PC-9 (cell line): ENCODE measurements at regions of chr1 and their contacts with region 1.

Region 1: GRCh38 chr1:27192039-27192529 is 37.2 kb upstream of the SLC9A1 start:
- DNase-seq: peak; percentile 44 to 78
- H3K4me3 ChIP-seq: no peak overlapping the region
- H3K27ac ChIP-seq: peak overlapping the region; percentile 94
- H3K4me1 ChIP-seq: peaks cover 21% of the 10 kb centered on the region
- H3K27me3 ChIP-seq: no peaks in the 10 kb centered on the region
- CTCF ChIP-seq: no peak

Region 2: DNA sequence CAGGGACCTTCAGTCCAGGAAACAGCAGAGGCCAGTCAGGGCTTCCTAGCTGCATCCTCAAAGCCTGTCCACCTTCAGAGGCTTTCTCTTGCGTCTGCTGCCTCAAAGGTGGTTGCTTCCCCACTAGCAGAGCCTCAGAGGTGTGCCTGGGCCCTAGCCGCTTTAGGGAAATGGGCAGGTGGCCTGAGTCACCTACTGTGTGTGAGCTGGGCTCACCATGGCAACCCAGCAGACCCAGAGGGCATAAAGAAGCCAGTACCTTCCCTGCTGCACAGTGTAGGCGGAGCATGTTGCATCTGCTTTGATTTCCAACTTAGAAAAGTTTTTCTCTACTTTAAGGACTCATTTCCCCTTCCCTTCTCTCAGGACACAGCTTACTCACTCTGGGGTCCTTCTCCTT is 49.6 kb before region 1 on chr1:
- CTCF ChIA-PET with region 1: interaction called, 10 read pairs
- POLR2A ChIA-PET with region 1: interaction called, 6 read pairs
- intact Hi-C with region 1: no loop called
- DNase-seq: peak; percentile 84 to 86
- H3K4me3 ChIP-seq: peak overlapping the region; percentile 16; the same call in 1 of the 2 replicates
- H3K27ac ChIP-seq: peak overlapping the region; percentile 65
- H3K4me1 ChIP-seq: peaks cover 70% of the 10 kb centered on the region
- H3K27me3 ChIP-seq: no peaks in the 10 kb centered on the region
- CTCF ChIP-seq: no peak

Region 3: DNA sequence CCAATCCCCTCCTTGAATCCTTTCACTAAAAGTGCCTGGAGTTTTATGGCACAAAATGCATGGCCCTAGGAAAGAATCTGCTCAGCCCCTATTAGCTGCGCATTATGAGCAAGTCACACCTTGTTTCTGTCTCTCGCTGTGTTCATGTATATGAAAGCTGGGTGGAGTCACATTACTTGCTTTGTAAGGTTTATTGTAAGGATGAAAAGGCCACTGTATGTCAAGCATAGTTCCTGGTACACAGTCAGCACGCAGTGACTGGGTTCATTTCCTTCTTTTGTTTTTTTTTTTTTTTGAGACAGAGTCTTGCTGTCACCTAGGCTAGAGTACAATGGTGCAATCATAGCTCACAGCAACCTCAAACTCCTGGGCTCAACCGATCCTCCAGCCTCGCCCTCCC is 30.5 kb before region 1 on chr1:
- CTCF ChIA-PET with region 1: interaction called, 7 read pairs
- POLR2A ChIA-PET with region 1: no interaction called
- intact Hi-C with region 1: loop called (anchors 1 kb)
- DNase-seq: peak; percentile 40 to 92
- H3K4me3 ChIP-seq: no peak overlapping the region
- H3K27ac ChIP-seq: peak overlapping the region; percentile 80
- H3K4me1 ChIP-seq: peaks cover 20% of the 10 kb centered on the region
- H3K27me3 ChIP-seq: no peaks in the 10 kb centered on the region
- CTCF ChIP-seq: no peak

Region 4: DNA sequence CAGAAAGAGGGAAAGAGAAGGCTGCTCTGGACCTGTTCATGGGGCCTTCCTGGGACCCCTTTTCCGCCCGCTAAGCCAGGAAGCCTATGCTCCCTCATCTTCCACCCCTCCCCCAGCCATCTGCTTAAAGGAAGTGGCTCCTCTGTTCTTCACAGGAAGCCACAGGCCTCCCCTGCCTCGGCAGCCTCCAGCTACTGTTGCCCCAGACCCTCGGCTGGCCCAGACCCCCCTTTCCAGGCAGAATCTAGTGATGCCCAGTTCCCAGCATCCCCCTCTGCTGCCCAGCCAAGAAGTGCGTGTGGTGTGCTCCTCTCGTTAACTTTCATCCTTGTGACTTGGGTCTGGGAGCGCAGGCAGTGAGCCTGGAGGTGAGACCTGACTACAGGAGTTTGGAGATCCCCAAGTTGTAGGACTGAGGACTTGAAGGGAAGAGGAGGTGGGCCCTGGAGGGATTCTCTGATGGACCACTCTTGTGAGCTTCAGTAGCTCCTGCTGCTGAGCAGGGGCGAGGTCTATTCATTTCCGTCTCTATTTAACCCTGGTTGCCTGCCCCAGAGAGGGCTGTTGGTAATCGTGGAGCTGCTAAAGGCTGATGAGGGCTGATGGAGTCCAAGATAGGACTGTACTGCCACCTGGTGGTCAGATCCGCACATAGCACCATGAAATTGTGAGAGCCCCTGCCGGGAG is 470.8 kb after region 1 on chr1:
- CTCF ChIA-PET with region 1: no interaction called
- POLR2A ChIA-PET with region 1: no interaction called
- intact Hi-C with region 1: no loop called
- DNase-seq: peak; percentile 53 to 78
- H3K4me3 ChIP-seq: no peak overlapping the region
- H3K27ac ChIP-seq: no peak overlapping the region
- H3K4me1 ChIP-seq: peaks cover 9% of the 10 kb centered on the region; the same call in 1 of the 2 replicates
- H3K27me3 ChIP-seq: no peaks in the 10 kb centered on the region
- CTCF ChIP-seq: peak; percentile 84